ENCODE measurements at regions of chr20 and their contacts with region 1.

Region 1: GRCh38 chr20:4720041-4720976 is 1.4 kb upstream of the PRND start:
- DNase-seq: peak; percentile 85
- H3K4me3 Mint-ChIP-seq: no peak overlapping the region
- H3K27ac Mint-ChIP-seq: no peak overlapping the region
- H3K4me1 Mint-ChIP-seq: peaks cover 6% of the 10 kb centered on the region
- H3K27me3 Mint-ChIP-seq: no peaks in the 10 kb centered on the region

Region 2: GRCh38 chr20:3995067-3995748 is 725.1 kb before region 1 on chr20:
- CTCF ChIA-PET with region 1: no interaction called
- POLR2A ChIA-PET with region 1: no interaction called
- intact Hi-C with region 1: no loop called
- DNase-seq: peak; percentile 50
- H3K4me3 Mint-ChIP-seq: peak overlapping the region; percentile 42
- H3K27ac Mint-ChIP-seq: peak overlapping the region; percentile 84
- H3K4me1 Mint-ChIP-seq: peaks cover 51% of the 10 kb centered on the region
- H3K27me3 Mint-ChIP-seq: no peaks in the 10 kb centered on the region

Region 3: DNA sequence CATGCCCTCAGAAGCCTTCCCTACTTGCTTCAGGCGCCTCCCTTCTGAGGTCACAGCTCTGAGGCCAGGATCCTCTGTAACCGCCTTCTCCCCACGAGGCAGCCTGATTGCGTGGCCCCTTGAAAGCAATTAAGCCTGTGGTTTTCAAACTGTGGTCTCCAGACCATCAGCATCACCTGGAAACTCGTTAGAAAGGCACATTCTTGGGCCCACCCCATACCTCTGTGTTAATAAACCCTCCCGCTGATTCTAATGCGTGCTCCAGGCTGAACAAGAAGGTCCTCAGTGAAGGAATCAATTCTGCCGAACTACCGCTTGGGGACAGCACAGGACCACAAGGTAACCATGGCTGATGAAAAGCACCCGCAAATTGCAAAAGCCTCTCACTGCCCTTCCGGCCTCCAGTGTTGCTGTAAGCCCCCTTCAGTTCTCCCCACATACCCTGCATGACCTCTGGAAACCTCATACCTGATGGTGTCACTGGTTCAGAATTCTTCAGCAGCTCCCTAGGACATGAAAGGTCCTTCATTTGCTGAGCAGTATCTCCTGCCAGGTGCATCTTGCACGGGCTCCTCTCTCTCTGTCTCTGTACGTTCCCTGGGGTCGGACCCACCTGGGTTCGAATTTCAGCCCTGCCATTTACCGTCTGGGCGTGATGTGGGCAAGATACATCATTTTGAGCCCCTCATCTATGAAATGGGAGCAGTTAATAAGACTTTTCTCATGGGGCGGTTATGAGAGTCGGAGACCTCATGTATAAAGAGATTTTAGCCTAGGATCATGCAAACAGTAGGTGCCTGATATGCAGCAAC is 611.6 kb before region 1 on chr20:
- CTCF ChIA-PET with region 1: no interaction called
- POLR2A ChIA-PET with region 1: no interaction called
- intact Hi-C with region 1: loop called (anchors 10 kb)
- DNase-seq: peak; percentile 82
- H3K4me3 Mint-ChIP-seq: no peak overlapping the region
- H3K27ac Mint-ChIP-seq: peak overlapping the region; percentile 15
- H3K4me1 Mint-ChIP-seq: peaks cover 22% of the 10 kb centered on the region
- H3K27me3 Mint-ChIP-seq: no peaks in the 10 kb centered on the region

Region 4: DNA sequence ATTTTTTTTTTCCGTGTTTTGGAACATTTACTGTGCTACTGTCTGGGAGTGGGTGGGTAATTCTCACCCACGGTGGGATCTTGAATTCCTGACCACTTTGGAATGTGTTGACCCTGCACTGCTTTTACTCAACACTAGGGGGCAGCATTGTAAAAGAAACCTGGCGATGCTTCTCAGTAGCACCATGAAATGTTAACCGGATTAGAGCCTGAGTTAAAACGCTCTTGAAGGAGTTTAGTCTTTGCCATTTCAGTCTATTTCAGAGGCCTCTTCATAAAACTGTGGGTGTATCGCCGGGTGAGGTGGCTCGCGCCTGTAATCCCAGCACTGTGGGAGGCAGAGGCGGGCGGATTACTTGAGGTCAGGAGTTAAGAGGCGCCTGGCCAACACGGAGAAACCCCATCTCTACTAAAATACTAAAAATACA is 113.0 kb before region 1 on chr20:
- CTCF ChIA-PET with region 1: interaction called, 194 read pairs
- POLR2A ChIA-PET with region 1: no interaction called
- intact Hi-C with region 1: loop called (anchors 1 kb)
- DNase-seq: peak; percentile 62
- H3K4me3 Mint-ChIP-seq: no peak overlapping the region
- H3K27ac Mint-ChIP-seq: no peak overlapping the region
- H3K4me1 Mint-ChIP-seq: no peaks in the 10 kb centered on the region
- H3K27me3 Mint-ChIP-seq: peaks cover 7% of the 10 kb centered on the region

Region 5: DNA sequence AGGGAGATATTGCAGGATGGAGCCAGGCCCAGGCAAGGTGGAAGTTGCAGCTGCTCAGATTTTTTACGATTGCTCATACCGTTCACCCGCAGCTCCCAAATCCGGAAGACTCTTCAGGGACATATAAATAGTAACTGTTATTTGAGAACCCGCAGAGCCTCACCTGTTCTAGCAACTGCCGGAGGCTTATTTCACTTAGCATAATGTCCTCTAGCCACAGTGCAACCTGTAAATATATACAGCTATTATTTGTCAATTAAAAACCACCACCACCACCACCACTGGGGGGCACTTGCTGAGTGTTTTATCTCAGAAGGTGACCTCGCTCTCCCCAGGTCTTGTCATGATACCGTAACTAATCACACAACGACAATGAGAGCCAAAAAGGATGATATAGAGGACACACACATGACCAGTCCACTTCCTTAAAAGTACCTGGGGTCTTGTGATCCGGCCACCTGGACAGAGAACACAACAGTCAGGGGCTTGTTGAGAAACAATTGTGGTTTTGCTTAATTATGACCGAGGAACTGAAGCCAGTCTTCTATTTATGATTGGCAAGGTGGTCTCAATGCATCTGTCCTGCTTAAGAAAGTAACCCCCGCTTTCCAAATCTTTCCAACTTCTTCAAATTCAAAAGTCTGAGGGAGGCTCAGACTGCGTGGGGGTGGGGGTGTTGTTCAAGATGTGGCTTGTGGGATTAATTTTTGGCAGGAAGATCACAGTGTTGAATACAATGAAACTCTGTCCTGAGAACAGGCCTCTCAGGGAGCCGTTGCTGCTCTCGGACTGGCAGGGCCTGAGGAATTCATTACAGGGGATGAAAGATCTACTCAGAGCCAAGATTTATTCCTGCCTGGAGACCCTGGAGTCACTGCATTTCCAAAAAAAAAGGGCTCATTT is 106.3 kb before region 1 on chr20:
- CTCF ChIA-PET with region 1: interaction called, 194 read pairs
- POLR2A ChIA-PET with region 1: no interaction called
- intact Hi-C with region 1: loop called (anchors 1 kb)
- DNase-seq: peak; percentile 79
- H3K4me3 Mint-ChIP-seq: no peak overlapping the region
- H3K27ac Mint-ChIP-seq: no peak overlapping the region
- H3K4me1 Mint-ChIP-seq: peaks cover 3% of the 10 kb centered on the region
- H3K27me3 Mint-ChIP-seq: no peaks in the 10 kb centered on the region

Region 6: DNA sequence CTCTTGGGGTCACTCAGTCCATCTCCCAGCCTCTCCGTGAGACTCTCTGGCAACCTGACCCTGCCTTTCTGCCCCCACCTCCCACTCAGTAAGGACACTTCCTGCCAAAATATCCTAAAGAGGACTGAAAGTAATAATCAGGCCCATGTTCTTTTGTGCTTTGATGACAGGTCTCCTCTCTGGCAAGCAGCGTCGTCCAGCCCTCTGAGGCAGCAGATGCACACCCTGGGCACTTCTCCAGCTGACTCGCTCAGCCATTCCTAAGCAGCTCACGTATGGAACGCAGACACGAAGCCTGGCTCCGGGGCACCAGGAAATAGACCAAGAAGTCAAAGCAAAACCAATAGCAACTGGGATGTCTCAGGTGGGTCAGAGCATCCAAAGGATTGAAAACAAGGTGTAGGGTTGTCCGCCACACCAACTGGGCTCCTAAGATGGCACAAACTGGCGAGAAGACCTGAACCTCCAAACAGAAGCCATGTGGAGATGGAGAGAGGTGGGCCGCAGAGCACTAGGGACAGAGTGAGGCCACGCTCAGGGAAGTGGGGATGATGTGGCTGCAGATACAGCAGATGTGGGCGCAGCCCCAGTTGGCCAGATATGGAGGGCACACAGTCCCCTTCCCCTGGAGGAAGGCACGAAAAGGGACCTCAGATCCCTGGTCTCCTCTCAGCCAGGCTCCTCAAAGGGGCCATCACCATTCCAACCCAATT is 100.7 kb after region 1 on chr20:
- CTCF ChIA-PET with region 1: no interaction called
- POLR2A ChIA-PET with region 1: no interaction called
- intact Hi-C with region 1: no loop called
- DNase-seq: no peak
- H3K4me3 Mint-ChIP-seq: no peak overlapping the region
- H3K27ac Mint-ChIP-seq: no peak overlapping the region
- H3K4me1 Mint-ChIP-seq: peaks cover 41% of the 10 kb centered on the region
- H3K27me3 Mint-ChIP-seq: no peaks in the 10 kb centered on the region

Region 7: DNA sequence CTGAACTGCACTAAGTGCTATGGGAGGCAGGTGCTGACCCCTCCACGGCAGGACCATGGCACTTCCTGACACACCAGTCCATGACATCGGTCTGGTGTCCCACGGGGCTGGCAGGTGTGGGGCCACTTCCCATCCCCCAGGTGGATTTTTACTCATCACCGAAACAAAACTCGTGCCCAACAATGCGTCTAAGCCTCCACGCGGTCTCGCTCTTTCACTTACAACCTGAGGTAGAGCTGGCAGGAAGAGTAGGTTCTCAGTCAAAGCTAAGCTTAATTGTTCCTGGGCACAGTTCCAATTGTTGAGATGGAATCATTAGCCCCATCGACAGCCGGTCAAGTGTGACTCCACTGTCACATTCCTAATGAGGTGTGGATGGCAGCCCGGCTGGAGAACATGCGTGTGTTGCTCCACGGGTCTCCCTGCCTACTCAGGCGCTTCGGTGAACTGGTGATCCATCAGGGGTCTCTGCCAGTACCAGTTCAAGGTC is 155.3 kb after region 1 on chr20:
- CTCF ChIA-PET with region 1: no interaction called
- POLR2A ChIA-PET with region 1: no interaction called
- intact Hi-C with region 1: no loop called
- DNase-seq: no peak
- H3K4me3 Mint-ChIP-seq: no peak overlapping the region
- H3K27ac Mint-ChIP-seq: no peak overlapping the region
- H3K4me1 Mint-ChIP-seq: no peaks in the 10 kb centered on the region
- H3K27me3 Mint-ChIP-seq: no peaks in the 10 kb centered on the region